Sigmoid colon (tissue), 7 donors: ENCODE measurements at regions of chr14 and their contacts with region 1.

Region 1: GRCh38 chr14:100547633-100548294 is 39.5 kb downstream of the BEGAIN start:
- DNase-seq: peak; percentile 81
- H3K4me3 ChIP-seq: no peak overlapping the region
- H3K27ac ChIP-seq: peak overlapping the region in 1 of 4 donors; percentile 76
- H3K4me1 ChIP-seq: peaks cover 0 to 14% (median 9%) of the 10 kb centered on the region in 4 donors
- H3K27me3 ChIP-seq: peaks cover 0 to 19% (median 10%) of the 10 kb centered on the region in 3 donors
- CTCF ChIP-seq: no peak
- EP300 ChIP-seq: no peak
- POLR2A ChIP-seq: no peak

Region 2: GRCh38 chr14:100504372-100505078 is 43.2 kb before region 1 on chr14:
- intact Hi-C with region 1: no loop called
- DNase-seq: no peak
- H3K4me3 ChIP-seq: no peak overlapping the region
- H3K27ac ChIP-seq: no peak overlapping the region
- H3K4me1 ChIP-seq: no peaks in the 10 kb centered on the region
- H3K27me3 ChIP-seq: no peaks in the 10 kb centered on the region
- CTCF ChIP-seq: no peak
- EP300 ChIP-seq: no peak
- POLR2A ChIP-seq: no peak

Region 3: DNA sequence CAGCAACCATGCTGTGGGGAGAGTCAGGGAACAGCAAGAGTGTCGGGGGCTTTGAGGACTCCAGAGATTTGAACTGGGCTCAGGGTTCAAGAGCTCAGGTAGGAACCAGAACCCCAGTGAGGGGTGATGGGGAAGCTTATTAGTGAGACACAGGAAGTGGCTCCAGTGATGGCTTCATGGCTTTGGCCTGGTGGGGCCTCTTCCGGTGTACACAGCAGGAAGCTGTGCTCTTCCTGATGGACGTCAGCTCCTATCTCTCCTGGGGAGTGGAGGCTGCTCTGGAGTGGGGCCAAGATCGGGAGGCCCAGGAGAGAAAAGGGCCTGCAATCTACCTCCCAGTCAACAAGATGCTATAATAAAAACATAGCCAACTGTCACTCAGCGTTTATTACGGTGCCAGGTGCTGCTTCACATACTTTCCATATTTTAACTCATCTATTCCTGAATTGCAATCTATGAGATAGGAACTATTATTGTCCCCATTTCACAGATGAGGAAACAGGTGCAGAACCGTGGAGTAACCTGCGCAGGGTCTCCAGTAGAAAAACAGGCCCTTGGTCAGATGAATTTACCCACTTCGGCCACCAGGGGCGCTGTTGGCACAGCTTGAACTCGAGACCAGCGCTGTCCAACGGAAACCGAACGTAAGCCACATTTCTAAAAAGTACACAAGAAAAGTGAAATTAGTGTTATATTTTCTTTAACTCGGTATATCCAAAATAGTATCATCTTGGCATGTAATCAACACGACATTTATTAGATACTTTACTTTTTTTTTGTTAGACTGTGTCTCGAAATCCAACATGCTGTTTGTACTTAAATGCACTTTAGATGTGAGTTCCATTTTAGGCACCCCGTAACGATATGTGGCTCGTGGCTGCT is 115.4 kb after region 1 on chr14:
- intact Hi-C with region 1: loop called (anchors 5 kb)
- DNase-seq: peak; percentile 77
- H3K4me3 ChIP-seq: no peak overlapping the region
- H3K27ac ChIP-seq: no peak overlapping the region
- H3K4me1 ChIP-seq: peaks cover 0 to 21% (median 17%) of the 10 kb centered on the region in 4 donors
- H3K27me3 ChIP-seq: peaks cover 0 to 32% (median 13%) of the 10 kb centered on the region in 3 donors
- CTCF ChIP-seq: peak; percentile 62 to 90 (median 80)
- EP300 ChIP-seq: no peak
- POLR2A ChIP-seq: no peak